ENCODE measurements at regions of chr5 and their contacts with region 1.

Region 1: DNA sequence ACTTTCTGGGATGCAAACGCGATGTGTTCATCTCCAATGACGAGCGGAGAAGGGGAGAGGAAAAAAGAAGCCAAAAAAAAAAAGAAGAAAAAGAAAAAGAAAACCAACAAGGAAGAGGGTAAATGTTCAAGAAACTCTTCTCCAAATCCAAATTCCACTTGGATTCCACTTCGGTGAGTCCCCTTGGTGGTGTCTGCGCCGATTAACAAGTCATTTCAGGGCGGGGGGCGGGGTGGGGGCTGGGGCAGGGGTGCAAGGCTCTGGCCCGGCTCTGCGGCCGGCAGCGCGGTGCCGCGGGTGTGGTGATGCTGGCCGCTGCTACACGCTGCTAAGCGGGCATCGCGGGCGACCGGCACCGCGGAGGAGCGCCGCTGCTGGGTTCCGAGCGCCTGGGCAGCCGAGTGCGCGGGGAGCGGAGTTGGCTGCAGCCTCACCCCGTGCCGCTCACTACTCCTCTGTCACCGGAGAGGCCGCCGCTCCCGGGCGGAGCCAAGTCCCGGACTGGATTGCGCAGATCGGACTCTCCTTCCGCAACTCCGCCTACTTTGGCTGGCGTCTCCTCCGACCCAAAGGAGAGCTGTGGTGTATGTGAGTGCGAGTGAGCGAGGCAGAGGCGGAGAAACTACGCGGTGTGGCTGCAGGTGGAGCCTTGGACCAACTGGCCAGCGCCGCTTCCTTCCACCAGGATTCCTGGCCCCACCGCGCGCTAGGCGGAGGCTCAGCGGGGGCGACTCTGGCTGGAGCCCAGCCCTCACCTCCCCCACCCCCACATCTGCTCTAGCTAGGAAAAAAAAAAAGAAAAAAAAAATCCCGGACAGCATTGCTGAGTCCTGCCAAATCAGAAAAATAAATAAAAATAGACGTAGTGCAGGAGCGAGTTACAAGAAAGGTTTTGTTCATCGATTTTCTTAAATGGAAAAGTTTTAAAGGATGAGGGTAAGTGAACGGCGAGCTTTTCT is at the start of gene SEMA6A:
- DNase-seq: peak; percentile 76
- H3K4me3 ChIP-seq: peak within 1 kb of the TSS; percentile 39 to 51
- H3K27ac ChIP-seq: peak within 1 kb of the TSS; percentile 44 to 45
- H3K4me1 ChIP-seq: no peaks in the 10 kb centered on the region
- H3K27me3 ChIP-seq: no peaks in the 10 kb centered on the region
- CTCF ChIP-seq: peak in 2 of 4 experiments; percentile 24 to 26
- POLR2A ChIP-seq: peak; percentile 31
- total RNA-seq, gene SEMA6A: 12.8 to 57.1 TPM

Region 2: GRCh38 chr5:116137544-116138378 is 436.9 kb before region 1 on chr5:
- intact Hi-C with region 1: loop called (anchors 10 kb)
- DNase-seq: no peak
- H3K4me3 ChIP-seq: no peak overlapping the region
- H3K27ac ChIP-seq: no peak overlapping the region
- H3K4me1 ChIP-seq: no peaks in the 10 kb centered on the region
- H3K27me3 ChIP-seq: no peaks in the 10 kb centered on the region
- CTCF ChIP-seq: peak; percentile 38 to 67 (median 63)
- POLR2A ChIP-seq: no peak

Region 3: GRCh38 chr5:116242343-116242742 is 332.3 kb before region 1 on chr5:
- intact Hi-C with region 1: no loop called
- DNase-seq: no peak
- H3K4me3 ChIP-seq: no peak overlapping the region
- H3K27ac ChIP-seq: no peak overlapping the region
- H3K4me1 ChIP-seq: no peaks in the 10 kb centered on the region
- H3K27me3 ChIP-seq: no peaks in the 10 kb centered on the region
- CTCF ChIP-seq: no peak
- POLR2A ChIP-seq: no peak

Region 4: GRCh38 chr5:116361171-116361967 is 213.3 kb before region 1 on chr5:
- intact Hi-C with region 1: loop called (anchors 5 kb)
- DNase-seq: peak; percentile 33
- H3K4me3 ChIP-seq: peak overlapping the region in 1 of 2 donors; percentile 22
- H3K27ac ChIP-seq: peak overlapping the region in 1 of 2 donors; percentile 2
- H3K4me1 ChIP-seq: no peaks in the 10 kb centered on the region
- H3K27me3 ChIP-seq: no peaks in the 10 kb centered on the region
- CTCF ChIP-seq: peak in 1 of 4 experiments; percentile 22
- POLR2A ChIP-seq: no peak

Region 5: DNA sequence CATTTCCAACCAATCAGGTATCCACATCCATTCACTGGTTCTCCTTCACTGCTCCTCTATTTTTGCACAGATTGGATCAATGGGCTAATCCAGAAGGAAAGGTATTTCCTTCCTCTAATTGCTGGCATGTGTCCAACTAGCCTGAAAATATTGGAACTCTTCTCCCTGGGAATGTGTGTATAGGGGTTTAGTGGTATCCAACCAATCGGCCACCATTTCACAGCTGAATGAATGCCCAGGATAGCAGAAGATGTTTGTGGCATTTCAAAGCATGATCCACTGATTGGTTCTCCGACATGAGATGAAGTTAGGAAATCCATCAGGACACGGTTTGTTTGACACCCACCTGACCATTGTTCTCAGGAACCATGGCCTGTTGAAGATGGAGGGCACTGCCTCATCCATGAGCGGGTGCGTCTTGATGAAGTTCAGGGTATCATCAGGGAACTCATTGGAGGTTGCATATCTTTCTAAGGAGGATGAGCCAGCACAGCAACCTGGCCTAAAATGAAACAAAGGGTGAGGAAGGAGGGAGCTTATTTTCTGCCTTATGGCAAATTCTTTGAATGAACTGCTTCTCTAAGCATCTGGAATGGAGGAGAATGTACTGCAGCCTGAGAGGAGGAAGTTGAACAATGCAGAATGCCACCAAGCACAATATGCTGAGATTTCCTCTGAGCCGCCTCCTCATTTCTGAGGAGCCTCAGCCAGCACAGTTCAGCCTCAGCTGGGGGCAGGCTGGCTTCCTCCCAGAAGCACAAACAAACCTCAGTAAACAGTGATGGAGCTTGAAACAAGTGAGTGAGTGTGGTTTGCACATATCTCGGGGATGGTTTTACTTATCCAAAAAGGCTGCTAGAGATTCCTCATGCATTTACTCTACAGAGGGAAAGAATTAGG is 94.6 kb before region 1 on chr5:
- intact Hi-C with region 1: no loop called
- DNase-seq: no peak
- H3K4me3 ChIP-seq: no peak overlapping the region
- H3K27ac ChIP-seq: no peak overlapping the region
- H3K4me1 ChIP-seq: no peaks in the 10 kb centered on the region
- H3K27me3 ChIP-seq: no peaks in the 10 kb centered on the region
- CTCF ChIP-seq: no peak
- POLR2A ChIP-seq: no peak

Region 6: DNA sequence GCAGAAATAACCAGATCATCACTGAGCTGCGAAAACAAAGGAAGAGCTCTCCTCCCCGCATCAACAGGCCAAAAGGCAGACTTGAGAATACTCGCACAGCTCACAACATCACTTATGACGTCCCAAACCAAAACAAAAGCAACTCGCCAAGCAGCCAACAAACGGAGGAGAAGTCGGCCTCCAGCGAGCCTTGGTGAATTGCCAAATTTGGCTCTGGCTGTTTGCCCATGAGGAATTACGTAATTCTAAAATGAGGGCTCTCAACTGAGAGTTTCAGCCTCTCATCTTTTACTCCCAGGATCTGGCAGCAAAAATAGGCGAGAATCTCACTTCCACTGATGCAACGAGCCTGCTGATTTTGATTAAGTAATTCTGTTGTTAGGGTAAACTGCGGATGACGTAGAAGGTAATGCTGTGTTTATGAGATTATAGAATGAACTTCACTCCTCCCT is 51.7 kb after region 1 on chr5:
- intact Hi-C with region 1: loop called (anchors 10 kb)
- DNase-seq: no peak
- H3K4me3 ChIP-seq: no peak overlapping the region
- H3K27ac ChIP-seq: peak overlapping the region in 1 of 2 donors; percentile 1
- H3K4me1 ChIP-seq: no peaks in the 10 kb centered on the region
- H3K27me3 ChIP-seq: no peaks in the 10 kb centered on the region
- CTCF ChIP-seq: no peak
- POLR2A ChIP-seq: no peak